GM12878 (cell line): ENCODE measurements at regions of chr17 and their contacts with region 1.

Region 1: GRCh38 chr17:17001874-17002520 is 30.1 kb upstream of the TNFRSF13B start:
- DNase-seq: no peak
- ATAC-seq: peak; percentile 98
- H3K4me3 ChIP-seq: no peak overlapping the region
- H3K27ac ChIP-seq: no peak overlapping the region
- H3K4me1 ChIP-seq: no peaks in the 10 kb centered on the region
- H3K27me3 ChIP-seq: no peaks in the 10 kb centered on the region
- CTCF ChIP-seq: peak; percentile 94 to 96 (median 95)
- EP300 ChIP-seq: no peak
- POLR2A ChIP-seq: no peak
- RAD21 ChIP-seq: peak; percentile 98

Region 2: DNA sequence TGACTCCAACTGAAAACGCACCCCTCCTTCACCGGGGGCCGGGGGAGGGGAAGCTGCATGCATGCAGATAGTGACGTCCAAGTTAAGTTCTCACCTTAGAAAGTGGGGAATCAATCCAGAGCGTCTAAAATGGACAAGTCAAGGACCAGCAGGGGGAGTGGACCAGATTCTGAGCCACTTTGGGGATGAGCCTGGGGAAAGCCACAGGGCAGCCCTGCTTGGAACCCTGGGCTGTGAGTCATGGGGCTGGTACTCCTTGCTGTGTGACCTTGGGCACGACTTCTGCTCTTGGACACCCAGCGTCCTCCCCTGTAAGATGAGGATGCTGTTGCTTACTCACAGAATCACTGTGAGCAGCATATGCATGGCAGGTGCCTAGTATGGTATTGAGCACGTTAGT is 39.2 kb before region 1 on chr17:
- CTCF ChIA-PET with region 1: no interaction called
- POLR2A ChIA-PET with region 1: no interaction called
- RAD21 ChIA-PET with region 1: no interaction called
- SMC1A ChIA-PET with region 1: no interaction called
- in situ Hi-C with region 1: no loop called
- intact Hi-C with region 1: no loop called
- DNase-seq: no peak
- ATAC-seq: no peak
- H3K4me3 ChIP-seq: 0 out of 2 replicates have a peak overlapping the region, but pooled peaks have one; percentile 0
- H3K27ac ChIP-seq: peak overlapping the region; percentile 92
- H3K4me1 ChIP-seq: peaks cover 54% of the 10 kb centered on the region
- H3K27me3 ChIP-seq: no peaks in the 10 kb centered on the region
- CTCF ChIP-seq: peak in 1 of 3 experiments; percentile 17; a peak in 1 of 6 replicates
- EP300 ChIP-seq: no peak
- POLR2A ChIP-seq: 0 out of 2 replicates have a peak, but pooled peaks have one; percentile 24
- RAD21 ChIP-seq: no peak

Region 3: DNA sequence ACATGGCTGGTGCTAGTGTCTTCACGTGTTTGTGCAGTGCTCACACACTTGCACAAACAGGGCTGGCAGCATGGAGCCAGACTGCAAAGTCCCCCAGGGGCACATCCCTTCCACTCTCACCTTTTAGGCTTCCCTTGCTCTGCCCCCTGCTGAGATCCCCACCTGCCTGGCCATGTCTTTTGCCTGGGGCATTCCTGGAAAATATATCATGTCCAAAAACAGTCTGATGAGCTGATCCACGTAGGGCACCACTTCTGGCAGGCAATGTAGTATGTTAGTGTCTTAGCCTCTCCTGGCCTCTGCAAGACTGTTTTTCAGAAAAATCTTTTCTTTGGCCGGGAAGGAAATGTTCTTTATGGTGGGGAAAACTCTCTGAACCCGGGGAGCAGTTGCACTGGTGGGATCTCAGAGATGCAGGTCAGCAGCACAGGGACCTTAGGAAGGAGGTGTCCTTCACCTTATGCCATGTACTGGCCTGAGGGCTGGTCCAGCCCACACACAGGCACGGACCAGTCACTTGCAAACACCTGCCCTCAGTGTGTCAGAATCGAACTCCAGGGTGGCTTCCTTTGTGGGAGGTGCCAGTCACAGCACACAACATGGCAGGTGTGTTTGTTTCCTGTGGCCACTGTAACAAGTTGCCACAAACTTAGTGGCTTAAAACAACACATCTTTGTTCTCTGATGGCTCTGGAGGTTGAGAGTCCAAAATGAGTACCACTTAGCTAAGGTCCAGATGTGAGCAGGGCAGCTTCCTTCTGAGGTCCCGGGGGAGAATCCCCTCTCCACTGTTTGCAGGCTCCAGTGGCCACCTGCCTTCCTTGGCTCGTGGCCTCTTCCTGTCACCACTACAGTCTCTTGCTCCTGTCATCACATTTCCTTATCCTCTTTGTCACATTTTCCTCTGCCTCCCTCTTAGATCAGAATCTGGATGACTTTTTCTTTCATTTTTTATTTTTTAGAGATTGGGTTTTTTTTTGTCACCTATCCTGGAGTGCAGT is 86.8 kb after region 1 on chr17:
- CTCF ChIA-PET with region 1: no interaction called
- POLR2A ChIA-PET with region 1: no interaction called
- RAD21 ChIA-PET with region 1: no interaction called
- SMC1A ChIA-PET with region 1: no interaction called
- in situ Hi-C with region 1: no loop called
- intact Hi-C with region 1: no loop called
- DNase-seq: no peak
- ATAC-seq: no peak; the same call in 2 of the 3 replicates
- H3K4me3 ChIP-seq: no peak overlapping the region
- H3K27ac ChIP-seq: no peak overlapping the region
- H3K4me1 ChIP-seq: no peaks in the 10 kb centered on the region
- H3K27me3 ChIP-seq: no peaks in the 10 kb centered on the region
- CTCF ChIP-seq: no peak
- EP300 ChIP-seq: no peak
- POLR2A ChIP-seq: no peak
- RAD21 ChIP-seq: no peak

Region 4: DNA sequence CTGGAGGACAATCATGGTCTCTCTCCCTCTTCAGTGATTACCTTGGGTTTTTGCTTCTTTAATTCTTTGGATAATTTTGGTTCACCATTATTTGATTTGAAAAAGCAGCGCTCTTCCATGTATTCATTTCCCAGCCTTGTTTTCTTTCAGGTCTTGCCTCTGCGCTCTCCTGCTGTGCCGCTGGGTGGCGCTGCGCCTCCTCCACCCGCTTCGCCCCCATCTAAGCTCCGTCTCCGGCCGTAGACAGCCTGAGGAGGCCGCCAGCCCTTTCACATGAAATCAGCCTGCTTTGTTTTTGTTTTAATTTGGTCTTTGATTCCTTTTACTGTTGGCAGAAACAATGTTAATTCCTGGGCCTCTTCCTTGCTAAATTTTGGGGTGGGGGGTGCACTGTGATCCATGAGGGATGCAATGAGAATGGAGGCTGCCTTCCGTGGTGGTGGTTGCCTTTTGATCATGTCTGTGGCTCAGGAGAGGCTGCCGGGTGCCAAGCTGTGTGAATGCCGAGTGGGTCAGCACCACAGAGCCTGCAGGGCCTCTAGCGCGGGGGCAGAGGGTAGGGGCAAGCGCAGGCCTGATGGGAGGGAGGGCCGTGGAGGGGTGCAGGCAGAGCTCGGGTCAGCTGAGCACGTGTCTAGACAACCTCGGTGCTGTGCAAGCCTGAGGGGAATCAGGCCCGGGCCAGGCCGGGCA is 140.0 kb after region 1 on chr17:
- CTCF ChIA-PET with region 1: interaction called, 5 read pairs
- POLR2A ChIA-PET with region 1: no interaction called
- RAD21 ChIA-PET with region 1: no interaction called
- SMC1A ChIA-PET with region 1: no interaction called
- in situ Hi-C with region 1: no loop called
- intact Hi-C with region 1: loop called (anchors 5 kb)
- DNase-seq: no peak
- ATAC-seq: peak; percentile 62
- H3K4me3 ChIP-seq: no peak overlapping the region
- H3K27ac ChIP-seq: no peak overlapping the region
- H3K4me1 ChIP-seq: no peaks in the 10 kb centered on the region; the same call in 1 of the 2 replicates
- H3K27me3 ChIP-seq: no peaks in the 10 kb centered on the region
- CTCF ChIP-seq: peak; percentile 62 to 81 (median 73)
- EP300 ChIP-seq: no peak
- POLR2A ChIP-seq: no peak
- RAD21 ChIP-seq: peak; percentile 73

Region 5: GRCh38 chr17:17206124-17206912 is 204.3 kb after region 1 on chr17 and contains the start of gene PLD6:
- CTCF ChIA-PET with region 1: no interaction called
- POLR2A ChIA-PET with region 1: no interaction called
- RAD21 ChIA-PET with region 1: no interaction called
- SMC1A ChIA-PET with region 1: no interaction called
- in situ Hi-C with region 1: no loop called
- intact Hi-C with region 1: loop called (anchors 10 kb)
- DNase-seq: peak; percentile 72
- ATAC-seq: peak; percentile 83
- H3K4me3 ChIP-seq: peak within 1 kb of the TSS; percentile 74
- H3K27ac ChIP-seq: peak within 1 kb of the TSS; percentile 58
- H3K4me1 ChIP-seq: peaks cover 9% of the 10 kb centered on the region; the same call in 1 of the 2 replicates
- H3K27me3 ChIP-seq: no peaks in the 10 kb centered on the region
- CTCF ChIP-seq: no peak
- EP300 ChIP-seq: no peak
- POLR2A ChIP-seq: peak; percentile 86
- RAD21 ChIP-seq: no peak
- polyA plus RNA-seq, gene PLD6: 4.7 to 21.4 TPM

Region 6: GRCh38 chr17:17237026-17237799 is 235.2 kb after region 1 on chr17 and contains the start of gene FLCN:
- CTCF ChIA-PET with region 1: interaction called, 5 read pairs
- POLR2A ChIA-PET with region 1: no interaction called
- RAD21 ChIA-PET with region 1: no interaction called
- SMC1A ChIA-PET with region 1: no interaction called
- in situ Hi-C with region 1: no loop called
- intact Hi-C with region 1: loop called (anchors 10 kb)
- DNase-seq: peak; percentile 65
- ATAC-seq: peak; percentile 96
- H3K4me3 ChIP-seq: peak within 1 kb of the TSS; percentile 97
- H3K27ac ChIP-seq: peak within 1 kb of the TSS; percentile 100
- H3K4me1 ChIP-seq: peaks cover 6% of the 10 kb centered on the region
- H3K27me3 ChIP-seq: no peaks in the 10 kb centered on the region
- CTCF ChIP-seq: no peak
- EP300 ChIP-seq: no peak
- POLR2A ChIP-seq: peak; percentile 90
- RAD21 ChIP-seq: no peak
- polyA plus RNA-seq, gene FLCN: 1.1 to 1.7 TPM

Region 7: GRCh38 chr17:17303010-17303846 is 301.2 kb after region 1 on chr17 and contains the start of gene NT5M:
- CTCF ChIA-PET with region 1: no interaction called
- POLR2A ChIA-PET with region 1: no interaction called
- RAD21 ChIA-PET with region 1: no interaction called
- SMC1A ChIA-PET with region 1: no interaction called
- in situ Hi-C with region 1: loop called (anchors 5 kb)
- intact Hi-C with region 1: no loop called
- DNase-seq: no peak
- ATAC-seq: peak; percentile 77
- H3K4me3 ChIP-seq: peak within 1 kb of the TSS; percentile 94
- H3K27ac ChIP-seq: peak within 1 kb of the TSS; percentile 35
- H3K4me1 ChIP-seq: peaks cover 34% of the 10 kb centered on the region
- H3K27me3 ChIP-seq: no peaks in the 10 kb centered on the region
- CTCF ChIP-seq: no peak
- EP300 ChIP-seq: no peak
- POLR2A ChIP-seq: peak; percentile 70
- RAD21 ChIP-seq: no peak
- polyA plus RNA-seq, gene NT5M: 0.18 to 1.5 TPM

Region 8: GRCh38 chr17:17313350-17313991 is 311.5 kb after region 1 on chr17:
- CTCF ChIA-PET with region 1: interaction called, 21 read pairs
- POLR2A ChIA-PET with region 1: no interaction called
- RAD21 ChIA-PET with region 1: no interaction called
- SMC1A ChIA-PET with region 1: interaction called, 4 read pairs
- in situ Hi-C with region 1: loop called (anchors 5 kb)
- intact Hi-C with region 1: loop called (anchors 1 kb)
- DNase-seq: no peak
- ATAC-seq: peak; percentile 100
- H3K4me3 ChIP-seq: no peak overlapping the region
- H3K27ac ChIP-seq: no peak overlapping the region
- H3K4me1 ChIP-seq: no peaks in the 10 kb centered on the region
- H3K27me3 ChIP-seq: no peaks in the 10 kb centered on the region
- CTCF ChIP-seq: peak; percentile 87 to 91 (median 89)
- EP300 ChIP-seq: no peak
- POLR2A ChIP-seq: no peak
- RAD21 ChIP-seq: peak; percentile 92